Activated CD8-positive, alpha-beta memory T cell treated with anti-CD3 and anti-CD28 coated beads, Interleukin-2, amount 10 ng/mL, durations not matched to agents 7 days and 5 days (primary cell): ENCODE measurements at regions of chr20 and their contacts with region 1.

Region 1: DNA sequence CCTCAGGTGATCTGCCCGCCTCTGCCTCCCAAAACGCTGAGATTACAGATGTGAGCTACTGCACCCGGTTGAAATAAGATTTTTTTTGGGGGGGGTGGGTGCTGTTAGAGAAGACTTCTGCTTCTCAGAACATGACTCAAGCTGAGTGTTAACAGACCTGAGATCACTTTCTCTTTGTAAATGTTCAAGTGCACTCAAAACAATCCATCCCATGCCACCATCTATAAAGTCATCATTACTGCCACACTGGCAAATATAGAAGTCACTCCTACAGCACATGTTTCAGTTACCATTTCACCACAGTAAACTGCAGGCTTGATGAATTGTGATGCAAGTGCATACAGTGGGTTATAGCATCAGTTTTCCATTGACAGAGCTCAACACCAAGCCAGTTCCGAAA is 9.0 kb downstream of the VPS16 start:
- DNase-seq: peak; percentile 14
- ATAC-seq: no peak
- H3K4me3 Mint-ChIP-seq: no peak overlapping the region
- H3K27ac Mint-ChIP-seq: no peak overlapping the region
- H3K4me1 Mint-ChIP-seq: peaks cover 45% of the 10 kb centered on the region
- H3K27me3 Mint-ChIP-seq: no peaks in the 10 kb centered on the region

Region 2: GRCh38 chr20:2564406-2564805 is 285.1 kb before region 1 on chr20:
- CTCF ChIA-PET with region 1: no interaction called
- DNase-seq: no peak
- ATAC-seq: no peak
- H3K4me3 Mint-ChIP-seq: no peak overlapping the region
- H3K27ac Mint-ChIP-seq: no peak overlapping the region
- H3K4me1 Mint-ChIP-seq: no peaks in the 10 kb centered on the region
- H3K27me3 Mint-ChIP-seq: peaks cover 55% of the 10 kb centered on the region

Region 3: DNA sequence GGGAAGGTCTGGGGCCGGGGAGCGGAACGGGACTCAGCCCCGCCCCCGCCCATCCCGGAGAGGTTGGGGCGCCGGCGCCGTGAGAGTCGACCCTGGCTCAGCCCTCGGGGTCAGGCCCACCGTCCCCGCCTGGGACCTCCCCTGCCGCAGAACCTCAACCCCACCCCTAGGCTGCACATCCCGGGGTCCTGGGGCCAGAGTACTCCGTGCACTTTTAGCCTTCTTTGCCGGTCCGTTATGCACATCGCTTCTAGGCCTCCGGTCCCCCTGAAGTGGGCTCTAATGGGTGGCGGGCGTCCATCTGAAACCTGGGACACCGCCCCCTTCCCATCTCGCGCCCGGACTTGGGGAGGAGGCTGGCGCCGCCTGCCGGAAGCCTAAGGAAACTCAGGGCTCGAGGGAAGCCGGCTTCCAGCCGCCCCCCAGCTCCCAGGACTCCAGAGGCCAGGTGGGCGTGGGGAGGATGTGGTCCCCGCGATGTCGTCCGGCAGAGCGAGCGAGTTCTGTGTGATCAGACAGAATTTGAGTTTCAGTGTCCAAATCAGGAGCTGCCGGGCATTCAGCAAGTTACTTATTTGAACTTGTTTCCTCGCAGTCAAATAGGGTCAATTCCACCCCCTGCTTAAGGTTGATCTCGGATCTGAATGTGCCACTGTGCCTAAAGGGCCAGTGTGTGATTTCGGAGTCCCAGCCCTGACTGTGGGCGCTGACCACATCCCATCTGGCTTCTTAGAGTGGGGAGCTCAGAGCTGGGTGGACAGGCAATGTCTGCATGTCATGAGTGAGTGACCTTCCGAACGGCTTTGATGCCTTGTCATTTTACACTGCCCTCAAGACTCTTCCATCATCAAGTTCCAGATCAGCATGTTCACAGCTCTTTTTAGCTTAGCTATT is 96.7 kb before region 1 on chr20:
- CTCF ChIA-PET with region 1: interaction called, 19 read pairs
- DNase-seq: peak; percentile 52
- ATAC-seq: peak; percentile 38
- H3K4me3 Mint-ChIP-seq: peak overlapping the region; percentile 62
- H3K27ac Mint-ChIP-seq: no peak overlapping the region
- H3K4me1 Mint-ChIP-seq: peaks cover 17% of the 10 kb centered on the region
- H3K27me3 Mint-ChIP-seq: peaks cover 70% of the 10 kb centered on the region

Region 4: DNA sequence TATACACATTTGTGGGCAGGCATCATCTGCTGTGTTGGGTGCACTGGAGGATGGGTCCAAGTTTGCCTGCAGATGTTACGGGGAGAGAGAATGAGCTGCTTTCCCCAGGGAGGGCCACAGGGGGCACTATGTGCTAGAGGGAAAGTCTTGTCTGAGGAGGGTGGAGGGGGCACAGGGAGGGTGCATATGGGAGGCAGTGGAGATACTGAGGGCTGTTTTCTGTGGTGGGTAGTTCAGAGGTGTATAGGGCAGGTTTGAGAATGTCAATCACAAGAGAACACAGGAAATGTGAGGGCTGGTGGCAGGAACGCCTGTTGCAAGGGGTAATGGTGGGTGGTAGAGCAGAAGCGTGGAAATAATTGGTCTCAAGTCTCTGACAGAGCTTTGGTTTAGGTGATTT is 16.1 kb after region 1 on chr20:
- CTCF ChIA-PET with region 1: interaction called, 13 read pairs
- DNase-seq: peak; percentile 74
- ATAC-seq: peak; percentile 77
- H3K4me3 Mint-ChIP-seq: no peak overlapping the region
- H3K27ac Mint-ChIP-seq: peak overlapping the region; percentile 80
- H3K4me1 Mint-ChIP-seq: peaks cover 41% of the 10 kb centered on the region
- H3K27me3 Mint-ChIP-seq: no peaks in the 10 kb centered on the region